Posterior cingulate gyrus (tissue), 11 donors: ENCODE measurements at regions of chrX and their contacts with region 1.

Region 1: DNA sequence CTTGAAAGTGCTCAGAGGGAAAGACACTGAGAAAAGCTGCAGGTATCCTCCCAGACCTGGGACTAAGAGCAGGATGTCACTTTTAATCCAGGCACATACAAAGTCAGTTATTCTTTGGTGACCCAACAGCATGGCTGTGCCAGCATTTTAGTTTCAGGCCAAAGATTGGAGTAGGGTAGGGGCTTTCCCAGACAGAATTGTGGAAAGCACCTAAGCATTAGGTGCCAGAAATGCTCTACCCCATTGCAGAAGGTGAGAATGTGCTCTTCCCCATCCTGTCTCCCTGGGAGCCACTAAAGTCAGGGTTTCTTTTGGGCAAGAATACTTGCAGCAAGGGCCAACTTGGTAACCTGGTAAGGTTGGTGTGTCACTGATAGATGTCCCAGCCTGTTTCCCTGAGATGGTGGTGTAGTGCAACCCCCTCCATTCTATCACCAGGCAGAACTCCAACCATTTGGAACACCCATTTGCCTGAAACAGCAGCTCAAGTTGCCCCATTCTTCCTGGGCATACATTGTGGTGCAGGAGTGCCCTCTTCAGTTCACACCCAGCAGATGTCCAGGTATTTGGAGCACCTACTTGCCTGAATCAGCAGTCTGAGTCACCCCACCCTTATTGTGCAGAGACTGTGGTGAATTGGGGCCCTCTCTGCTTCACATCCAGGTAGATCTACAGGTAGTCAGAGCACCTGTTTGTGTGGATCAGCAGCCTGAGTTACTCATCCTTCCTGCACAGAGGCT is 183.5 kb downstream of the ZC4H2 start:
- DNase-seq: no peak

Region 2: GRCh38 chrX:64739792-64740378 is 52.9 kb before region 1 on chrX:
- intact Hi-C with region 1: loop called (anchors 10 kb)
- DNase-seq: peak in 1 of 10 donors; percentile 44